ENCODE measurements at regions of chr15 and their contacts with region 1.

Region 1: DNA sequence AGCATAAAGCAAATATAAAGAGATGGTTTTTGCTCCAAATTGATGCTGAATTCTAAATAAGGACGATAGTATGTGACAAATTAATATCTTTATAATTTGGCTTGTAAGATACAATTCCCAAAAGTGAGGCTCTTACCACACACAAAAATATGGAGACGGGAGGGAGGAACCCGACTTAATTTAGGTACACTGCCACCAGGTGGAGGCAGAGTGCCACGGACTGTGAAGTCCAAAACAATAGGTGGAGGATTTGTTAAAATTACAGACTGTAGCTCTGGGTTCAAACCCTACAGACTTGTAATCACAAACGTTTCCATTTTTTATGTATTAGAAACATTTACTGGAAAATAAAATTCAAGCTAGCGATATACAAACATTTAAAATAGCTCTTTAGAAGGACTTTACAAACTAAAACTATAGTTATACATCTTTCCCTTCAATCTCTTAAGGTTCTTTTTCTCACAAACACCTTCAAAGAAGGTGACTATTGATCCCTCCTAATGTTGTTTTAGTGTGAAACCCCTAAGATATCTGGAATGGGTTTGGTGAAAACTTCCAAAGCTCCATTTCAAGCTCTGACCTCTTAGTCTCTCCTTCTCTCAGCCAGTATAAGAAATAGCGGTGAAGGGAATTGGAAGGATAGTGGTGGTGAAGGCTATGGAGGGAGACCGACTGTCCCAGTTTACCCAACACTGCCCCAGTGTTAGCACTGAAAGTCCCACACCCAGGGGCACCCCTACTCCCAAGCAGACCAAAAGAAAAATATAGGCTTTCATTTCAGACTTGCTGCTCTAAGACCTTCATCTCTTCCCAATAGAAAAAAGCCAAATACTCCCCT is 89.7 kb downstream of the AQP9 start:
- DNase-seq: no peak
- ATAC-seq: no peak
- H3K4me3 Mint-ChIP-seq: no peak overlapping the region
- H3K27ac Mint-ChIP-seq: no peak overlapping the region
- H3K4me1 Mint-ChIP-seq: no peaks in the 10 kb centered on the region
- H3K27me3 Mint-ChIP-seq: peaks cover 10% of the 10 kb centered on the region
- CTCF ChIP-seq: no peak

Region 2: DNA sequence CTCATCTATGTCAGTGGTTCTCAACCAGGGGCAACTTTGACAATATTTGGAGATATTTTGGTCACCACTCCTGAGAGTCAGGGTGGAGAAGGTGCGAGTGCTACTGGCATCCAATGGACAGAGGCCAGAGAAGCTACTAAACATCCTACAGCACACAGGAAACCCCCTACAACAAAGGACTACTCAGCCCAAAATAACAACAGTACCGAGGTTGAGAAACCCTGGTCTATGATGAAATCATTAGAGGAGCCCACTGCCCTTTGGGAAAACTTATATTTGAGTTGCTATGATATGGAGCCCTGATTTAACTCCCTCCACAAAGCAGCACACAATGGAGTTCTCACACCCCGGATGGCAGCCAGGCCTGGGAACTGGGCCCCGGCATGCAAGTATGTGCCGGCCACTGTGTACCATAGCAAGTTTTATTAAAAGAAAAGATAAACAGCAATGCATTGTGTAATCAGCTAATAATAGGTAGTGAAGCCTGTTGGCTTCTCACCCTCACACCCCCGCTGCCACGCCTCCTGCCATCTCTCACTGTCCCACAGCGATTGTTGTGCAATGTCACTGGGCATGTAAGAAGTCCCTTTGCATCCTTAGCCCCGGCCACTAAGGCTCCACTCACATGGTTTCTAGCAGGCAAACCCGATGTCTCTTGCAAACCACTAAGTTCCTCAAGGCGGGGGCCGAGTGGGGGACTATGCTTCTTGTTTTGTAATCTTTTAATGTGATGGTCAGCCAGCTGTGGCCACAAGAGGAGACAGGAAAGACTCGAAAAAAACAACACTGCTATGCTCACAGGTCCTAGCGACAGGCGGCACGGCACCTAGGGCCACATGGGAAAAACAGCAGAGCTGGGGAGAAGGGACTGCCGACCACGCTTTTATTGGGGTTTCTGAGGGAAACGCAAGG is 20.2 kb after region 1 on chr15:
- CTCF ChIA-PET with region 1: no interaction called
- POLR2A ChIA-PET with region 1: no interaction called
- intact Hi-C with region 1: no loop called
- DNase-seq: no peak
- ATAC-seq: no peak
- H3K4me3 Mint-ChIP-seq: no peak overlapping the region
- H3K27ac Mint-ChIP-seq: no peak overlapping the region
- H3K4me1 Mint-ChIP-seq: no peaks in the 10 kb centered on the region
- H3K27me3 Mint-ChIP-seq: peaks cover 11% of the 10 kb centered on the region
- CTCF ChIP-seq: no peak

Region 3: GRCh38 chr15:58758138-58758537 is 530.2 kb after region 1 on chr15:
- CTCF ChIA-PET with region 1: no interaction called
- POLR2A ChIA-PET with region 1: no interaction called
- intact Hi-C with region 1: loop called (anchors 5 kb)
- DNase-seq: no peak
- ATAC-seq: no peak
- H3K4me3 Mint-ChIP-seq: no peak overlapping the region
- H3K27ac Mint-ChIP-seq: no peak overlapping the region
- H3K4me1 Mint-ChIP-seq: no peaks in the 10 kb centered on the region
- H3K27me3 Mint-ChIP-seq: peaks cover 4% of the 10 kb centered on the region
- CTCF ChIP-seq: no peak

Region 4: GRCh38 chr15:59501597-59501996 is 1273.7 kb after region 1 on chr15:
- CTCF ChIA-PET with region 1: no interaction called
- POLR2A ChIA-PET with region 1: no interaction called
- intact Hi-C with region 1: loop called (anchors 5 kb)
- DNase-seq: no peak
- ATAC-seq: peak; percentile 67
- H3K4me3 Mint-ChIP-seq: no peak overlapping the region
- H3K27ac Mint-ChIP-seq: no peak overlapping the region
- H3K4me1 Mint-ChIP-seq: no peaks in the 10 kb centered on the region
- H3K27me3 Mint-ChIP-seq: no peaks in the 10 kb centered on the region
- CTCF ChIP-seq: peak; percentile 24